Naive thymus-derived CD4-positive, alpha-beta T cell (primary cell): ENCODE measurements at regions of chrX and their contacts with region 1.

Region 1: DNA sequence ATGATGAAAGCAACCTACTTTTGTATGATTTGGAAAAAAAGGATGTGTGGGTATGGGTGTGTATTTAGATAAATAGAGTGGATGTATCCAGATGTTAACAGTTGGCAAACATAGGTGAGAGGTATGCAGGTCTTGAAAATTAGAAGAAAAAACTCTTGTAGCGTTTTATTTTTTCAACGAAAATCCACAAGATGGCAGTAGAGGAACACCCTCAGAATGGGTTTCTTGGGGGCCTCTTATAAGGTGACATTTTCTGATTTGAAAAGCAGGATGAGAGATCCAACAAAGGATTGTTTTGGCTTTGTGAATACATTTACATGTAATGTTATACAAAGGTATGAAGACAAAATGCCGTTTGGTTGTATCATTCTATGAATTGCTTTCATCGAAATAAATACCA is 68.3 kb downstream of the FMR1NB start:
- DNase-seq: peak in 6 of 9 donors; percentile 10 to 41 (median 36)
- ATAC-seq: no peak
- H3K4me3 ChIP-seq: no peak overlapping the region
- H3K4me3 Mint-ChIP-seq: no peak overlapping the region
- H3K27ac ChIP-seq: no peak overlapping the region
- H3K27ac Mint-ChIP-seq: no peak overlapping the region
- H3K4me1 ChIP-seq: no peaks in the 10 kb centered on the region
- H3K4me1 Mint-ChIP-seq: no peaks in the 10 kb centered on the region
- H3K27me3 ChIP-seq: no peaks in the 10 kb centered on the region
- H3K27me3 Mint-ChIP-seq: peaks cover 0 to 5% (median 0%) of the 10 kb centered on the region in 5 donors

Region 2: DNA sequence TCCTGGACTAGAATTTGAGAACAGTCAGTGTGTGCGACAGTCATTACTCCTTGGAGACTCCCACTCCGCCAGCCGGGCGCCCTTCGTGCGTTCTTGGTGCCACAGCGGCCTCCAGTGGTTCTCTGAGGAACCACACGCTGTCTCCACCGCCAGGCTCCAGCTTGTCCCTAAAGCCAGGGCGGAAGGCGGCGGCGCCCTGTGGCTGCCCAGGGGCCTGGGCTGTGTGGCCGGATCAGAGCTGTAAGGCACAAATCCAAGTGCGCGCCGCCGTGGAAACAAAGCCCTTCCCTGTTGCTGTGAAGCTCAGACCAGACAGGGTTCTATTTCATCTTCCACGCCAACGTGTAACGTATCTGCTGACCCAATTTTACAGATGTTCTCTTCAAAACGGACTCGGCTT is 1421.5 kb after region 1 on chrX:
- CTCF ChIA-PET with region 1: interaction called, 3 read pairs
- POLR2A ChIA-PET with region 1: no interaction called
- intact Hi-C with region 1: loop called (anchors 1 kb)
- DNase-seq: peak; percentile 21 to 65 (median 49)
- ATAC-seq: peak; percentile 86
- H3K4me3 ChIP-seq: no peak overlapping the region
- H3K4me3 Mint-ChIP-seq: peak overlapping the region in 2 of 10 donors; percentile 30 to 35
- H3K27ac ChIP-seq: no peak overlapping the region
- H3K27ac Mint-ChIP-seq: no peak overlapping the region
- H3K4me1 ChIP-seq: no peaks in the 10 kb centered on the region
- H3K4me1 Mint-ChIP-seq: no peaks in the 10 kb centered on the region
- H3K27me3 ChIP-seq: no peaks in the 10 kb centered on the region
- H3K27me3 Mint-ChIP-seq: peaks cover 0 to 4% (median 3%) of the 10 kb centered on the region in 5 donors